H1 (cell line): ENCODE measurements at regions of chr2 and their contacts with region 1.

Region 1: GRCh38 chr2:30239308-30239985 is 8.1 kb downstream of the LBH start:
- DNase-seq: peak in 1 of 2 experiments; percentile 88
- H3K4me3 ChIP-seq: no peak overlapping the region
- H3K27ac ChIP-seq: no peak overlapping the region
- H3K4me1 ChIP-seq: no peaks in the 10 kb centered on the region
- H3K27me3 ChIP-seq: no peaks in the 10 kb centered on the region
- CTCF ChIP-seq: peak; percentile 81 to 99 (median 93)
- EP300 ChIP-seq: no peak
- POLR2A ChIP-seq: no peak
- RAD21 ChIP-seq: peak; percentile 71 to 82

Region 2: DNA sequence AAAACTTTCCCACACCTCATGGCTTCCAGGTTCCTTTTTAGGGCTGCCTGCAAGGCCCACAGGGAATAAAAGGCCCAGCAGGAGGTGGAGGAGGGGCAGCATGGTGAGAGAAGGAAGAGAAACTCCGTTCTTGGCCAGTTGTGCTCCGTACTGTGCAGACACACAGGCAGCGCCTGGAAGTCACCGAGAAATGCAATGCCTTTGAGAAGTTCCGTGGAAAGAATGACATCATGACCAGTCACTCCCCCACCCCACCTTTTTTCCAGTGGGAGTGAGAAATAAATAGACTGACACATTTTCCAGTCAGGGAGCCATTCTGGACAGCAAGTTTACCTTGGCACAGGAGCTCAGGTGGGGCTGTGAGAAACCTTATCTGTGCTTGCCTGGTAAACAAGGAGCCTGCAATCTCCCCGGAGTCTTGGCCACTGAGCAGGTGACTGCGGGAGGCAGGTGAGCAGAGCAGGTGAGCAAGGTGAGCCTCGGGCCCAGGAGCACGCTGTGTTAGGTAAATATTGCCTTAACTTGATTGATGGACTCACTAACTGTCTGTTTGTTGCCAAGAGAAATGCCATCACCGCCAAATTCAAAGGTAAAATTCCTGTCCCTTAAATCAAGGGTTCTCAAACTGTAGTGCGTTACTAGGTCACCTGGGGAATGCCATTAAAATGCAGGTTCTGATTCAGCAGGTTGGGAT is 21.7 kb before region 1 on chr2:
- CTCF ChIA-PET with region 1: interaction called, 10 read pairs
- POLR2A ChIA-PET with region 1: no interaction called
- DNase-seq: no peak
- H3K4me3 ChIP-seq: no peak overlapping the region
- H3K27ac ChIP-seq: no peak overlapping the region
- H3K4me1 ChIP-seq: peaks cover 0 to 9% (median 2%) of the 10 kb centered on the region in 4 experiments; a peak in 4 of 7 replicates
- H3K27me3 ChIP-seq: no peaks in the 10 kb centered on the region
- CTCF ChIP-seq: no peak
- EP300 ChIP-seq: no peak
- POLR2A ChIP-seq: no peak
- RAD21 ChIP-seq: no peak

Region 3: GRCh38 chr2:30252723-30253701 is 13.6 kb after region 1 on chr2:
- CTCF ChIA-PET with region 1: interaction called, 74 read pairs
- POLR2A ChIA-PET with region 1: no interaction called
- DNase-seq: no peak
- H3K4me3 ChIP-seq: no peak overlapping the region
- H3K27ac ChIP-seq: no peak overlapping the region
- H3K4me1 ChIP-seq: peaks cover 0 to 4% (median 1%) of the 10 kb centered on the region in 4 experiments; a peak in 1 of 7 replicates
- H3K27me3 ChIP-seq: no peaks in the 10 kb centered on the region
- CTCF ChIP-seq: no peak
- EP300 ChIP-seq: no peak
- POLR2A ChIP-seq: no peak
- RAD21 ChIP-seq: no peak

Region 4: GRCh38 chr2:30259827-30260679 is 20.6 kb after region 1 on chr2:
- CTCF ChIA-PET with region 1: interaction called, 74 read pairs
- POLR2A ChIA-PET with region 1: interaction called, 5 read pairs
- DNase-seq: no peak
- H3K4me3 ChIP-seq: no peak overlapping the region
- H3K27ac ChIP-seq: no peak overlapping the region
- H3K4me1 ChIP-seq: no peaks in the 10 kb centered on the region
- H3K27me3 ChIP-seq: no peaks in the 10 kb centered on the region
- CTCF ChIP-seq: no peak
- EP300 ChIP-seq: no peak
- POLR2A ChIP-seq: no peak
- RAD21 ChIP-seq: no peak

Region 5: DNA sequence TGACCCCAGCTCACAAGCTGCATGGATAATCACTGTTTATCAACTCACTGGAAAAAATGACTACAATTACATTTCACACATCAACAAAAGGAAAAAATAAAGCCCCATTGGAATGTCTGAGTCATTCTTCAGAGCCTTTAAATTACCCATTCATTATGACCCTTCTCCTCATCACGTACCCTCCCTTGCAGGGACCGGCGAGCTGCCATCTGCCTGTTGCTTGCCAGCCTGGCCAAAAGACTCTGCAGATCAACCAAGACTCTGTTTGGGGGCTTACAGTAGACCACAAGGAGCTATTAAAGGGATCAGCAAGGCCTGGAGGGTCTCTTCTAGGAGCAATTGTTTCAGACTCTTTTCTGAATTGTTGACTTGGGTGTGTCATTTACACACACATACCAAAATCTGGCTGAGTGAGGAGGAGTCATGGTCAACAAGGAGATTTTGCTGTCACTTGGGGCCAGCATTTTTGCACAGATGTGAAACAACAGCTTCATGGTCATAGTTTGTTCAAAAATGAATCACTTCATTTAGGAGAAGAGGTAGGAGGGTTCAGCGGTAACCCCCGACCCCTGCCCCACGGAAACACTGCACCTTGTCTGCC is 33.9 kb after region 1 on chr2:
- CTCF ChIA-PET with region 1: interaction called, 13 read pairs
- POLR2A ChIA-PET with region 1: no interaction called
- DNase-seq: no peak
- H3K4me3 ChIP-seq: no peak overlapping the region
- H3K27ac ChIP-seq: no peak overlapping the region
- H3K4me1 ChIP-seq: 0 out of 7 replicates have a peak, but pooled peaks cover 0 to 3% (median 0%) of the 10 kb centered on the region in 4 experiments
- H3K27me3 ChIP-seq: no peaks in the 10 kb centered on the region
- CTCF ChIP-seq: no peak
- EP300 ChIP-seq: no peak
- POLR2A ChIP-seq: no peak
- RAD21 ChIP-seq: no peak

Region 6: GRCh38 chr2:30300456-30301221 is 61.2 kb after region 1 on chr2:
- CTCF ChIA-PET with region 1: interaction called, 14 read pairs
- POLR2A ChIA-PET with region 1: no interaction called
- DNase-seq: no peak
- H3K4me3 ChIP-seq: no peak overlapping the region
- H3K27ac ChIP-seq: no peak overlapping the region
- H3K4me1 ChIP-seq: peaks cover 8 to 29% (median 10%) of the 10 kb centered on the region in 4 experiments
- H3K27me3 ChIP-seq: peaks cover 0 to 7% (median 4%) of the 10 kb centered on the region in 4 experiments; a peak in 4 of 7 replicates
- CTCF ChIP-seq: no peak
- EP300 ChIP-seq: no peak
- POLR2A ChIP-seq: no peak
- RAD21 ChIP-seq: no peak

Region 7: GRCh38 chr2:30336978-30337841 is 97.8 kb after region 1 on chr2:
- CTCF ChIA-PET with region 1: interaction called, 21 read pairs
- POLR2A ChIA-PET with region 1: no interaction called
- DNase-seq: no peak
- H3K4me3 ChIP-seq: no peak overlapping the region
- H3K27ac ChIP-seq: no peak overlapping the region
- H3K4me1 ChIP-seq: peaks cover 0 to 3% (median 0%) of the 10 kb centered on the region in 4 experiments; a peak in 2 of 7 replicates
- H3K27me3 ChIP-seq: no peaks in the 10 kb centered on the region
- CTCF ChIP-seq: no peak
- EP300 ChIP-seq: no peak
- POLR2A ChIP-seq: no peak
- RAD21 ChIP-seq: no peak

Region 8: GRCh38 chr2:30358842-30359241 is 119.4 kb after region 1 on chr2:
- CTCF ChIA-PET with region 1: no interaction called
- POLR2A ChIA-PET with region 1: no interaction called
- DNase-seq: no peak
- H3K4me3 ChIP-seq: no peak overlapping the region
- H3K27ac ChIP-seq: no peak overlapping the region
- H3K4me1 ChIP-seq: no peaks in the 10 kb centered on the region
- H3K27me3 ChIP-seq: no peaks in the 10 kb centered on the region
- CTCF ChIP-seq: no peak
- EP300 ChIP-seq: no peak
- POLR2A ChIP-seq: no peak
- RAD21 ChIP-seq: no peak